Breast epithelium (tissue), 4 donors: ENCODE measurements at regions of chr2 and their contacts with region 1.

Region 1: GRCh38 chr2:7027946-7028655 is 110.9 kb downstream of the RNF144A start:
- DNase-seq: no peak
- H3K4me3 ChIP-seq: no peak overlapping the region
- H3K27ac ChIP-seq: no peak overlapping the region
- H3K4me1 ChIP-seq: no peaks in the 10 kb centered on the region
- H3K27me3 ChIP-seq: no peaks in the 10 kb centered on the region
- CTCF ChIP-seq: no peak
- POLR2A ChIP-seq: no peak

Region 2: DNA sequence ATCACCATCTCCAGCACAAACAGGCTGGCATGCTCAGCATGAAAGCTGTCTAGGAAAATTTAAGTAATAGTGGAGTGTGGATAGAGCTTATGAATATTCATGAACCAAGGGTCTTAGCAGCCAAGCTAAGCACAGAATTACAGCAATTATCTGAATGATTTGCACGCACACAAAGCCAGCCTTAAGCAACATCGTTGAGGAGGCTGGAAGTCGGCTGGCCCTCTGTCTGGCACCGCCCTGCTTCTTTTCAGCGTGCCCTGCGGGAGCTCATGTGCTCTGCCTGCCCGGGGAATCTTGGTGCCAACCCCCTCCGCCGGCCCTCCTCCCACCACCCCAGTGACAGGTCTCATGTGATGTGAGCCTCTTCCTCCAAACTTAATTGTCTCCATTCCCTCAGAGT is 702.5 kb before region 1 on chr2:
- intact Hi-C with region 1: no loop called
- DNase-seq: no peak
- H3K4me3 ChIP-seq: no peak overlapping the region
- H3K27ac ChIP-seq: no peak overlapping the region
- H3K4me1 ChIP-seq: no peaks in the 10 kb centered on the region
- H3K27me3 ChIP-seq: no peaks in the 10 kb centered on the region
- CTCF ChIP-seq: no peak
- POLR2A ChIP-seq: no peak

Region 3: DNA sequence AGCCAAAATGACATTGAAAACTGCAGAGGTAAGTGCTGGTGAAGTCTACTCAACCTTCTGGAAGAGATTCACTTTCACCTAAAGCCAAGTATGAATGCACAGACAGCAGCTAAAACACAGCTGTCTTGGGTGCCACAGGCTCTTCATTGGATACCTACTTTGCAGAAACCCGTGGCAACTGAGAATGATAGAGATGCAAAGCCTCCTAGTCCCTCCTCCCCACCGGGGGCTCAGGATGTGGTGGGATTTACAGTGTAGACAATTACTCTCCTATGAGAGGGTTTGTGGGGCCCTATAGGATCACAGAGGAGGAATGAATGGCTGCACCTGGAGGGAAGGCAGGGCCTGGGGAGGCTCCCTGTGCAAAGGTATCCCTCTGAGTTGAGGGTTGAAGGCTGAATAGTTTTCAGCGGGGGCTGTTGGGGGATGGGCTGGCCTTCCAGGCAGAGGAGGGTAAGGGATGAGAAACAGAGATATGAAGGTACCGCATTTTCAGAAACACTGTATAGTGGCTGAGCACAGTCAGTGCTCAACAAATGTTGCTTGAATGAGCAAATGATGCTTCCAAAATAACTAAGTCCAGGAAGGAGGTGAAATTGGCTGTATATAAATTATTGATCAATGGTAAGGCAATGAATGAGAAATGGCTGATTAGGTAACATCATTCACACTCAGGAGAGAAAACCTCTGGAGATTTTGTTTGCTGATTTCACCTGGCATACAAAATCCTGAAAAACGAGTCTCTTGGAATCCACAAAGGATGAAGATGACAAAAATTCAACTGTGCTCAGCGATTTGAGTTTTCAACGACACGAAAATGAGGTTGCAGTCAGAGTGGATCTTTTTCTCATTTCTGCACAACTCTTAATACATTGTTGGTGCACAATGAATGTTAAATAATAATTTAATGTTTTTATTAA is 20.9 kb after region 1 on chr2:
- intact Hi-C with region 1: loop called (anchors 1 kb)
- DNase-seq: no peak
- H3K4me3 ChIP-seq: no peak overlapping the region
- H3K27ac ChIP-seq: no peak overlapping the region
- H3K4me1 ChIP-seq: peaks cover 0 to under 1% of the 10 kb centered on the region in 2 donors
- H3K27me3 ChIP-seq: no peaks in the 10 kb centered on the region
- CTCF ChIP-seq: no peak
- POLR2A ChIP-seq: no peak